ENCODE measurements at regions of chr15 and their contacts with region 1.

Region 1: DNA sequence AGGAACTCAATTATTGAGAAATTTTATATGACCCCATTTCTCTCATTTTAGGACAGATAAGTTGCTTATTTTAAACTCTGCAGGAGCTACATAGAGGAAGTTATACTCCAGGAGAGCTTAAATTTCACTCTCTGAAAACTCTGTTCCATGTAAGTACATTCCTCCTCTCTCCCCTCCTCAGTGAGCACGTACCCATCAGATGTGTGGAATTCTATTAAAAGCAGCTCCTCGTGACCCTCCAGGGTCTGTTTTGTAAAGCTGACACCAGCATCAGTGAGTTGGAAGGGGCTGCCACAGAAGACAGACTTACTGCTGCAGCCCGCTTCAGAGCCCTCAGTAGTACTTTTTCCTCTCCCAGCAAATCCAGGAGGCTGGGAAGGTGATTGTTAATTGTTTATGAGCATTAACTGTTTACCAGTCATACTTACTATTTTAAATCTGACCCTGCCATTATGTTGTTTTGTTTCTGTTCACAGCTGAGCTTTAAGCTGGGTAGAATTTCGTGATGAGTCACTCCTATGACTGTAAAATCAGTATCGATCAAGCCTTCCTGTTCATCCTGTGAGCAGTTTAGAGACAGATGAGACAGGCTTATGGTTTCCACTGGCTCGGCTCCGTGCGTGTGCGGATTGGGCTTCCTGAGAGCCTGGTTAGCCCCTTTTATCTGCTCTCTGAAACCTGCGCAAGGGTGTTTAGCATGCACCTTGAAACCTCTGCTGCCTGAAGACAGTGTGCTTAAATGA is 20.4 kb downstream of the IGF1R start:
- DNase-seq: no peak
- ATAC-seq: no peak
- H3K4me3 ChIP-seq: no peak overlapping the region
- H3K27ac ChIP-seq: no peak overlapping the region
- H3K4me1 ChIP-seq: peaks cover 11 to 48% of the 10 kb centered on the region in 2 donors
- H3K27me3 ChIP-seq: no peaks in the 10 kb centered on the region
- CTCF ChIP-seq: no peak

Region 2: DNA sequence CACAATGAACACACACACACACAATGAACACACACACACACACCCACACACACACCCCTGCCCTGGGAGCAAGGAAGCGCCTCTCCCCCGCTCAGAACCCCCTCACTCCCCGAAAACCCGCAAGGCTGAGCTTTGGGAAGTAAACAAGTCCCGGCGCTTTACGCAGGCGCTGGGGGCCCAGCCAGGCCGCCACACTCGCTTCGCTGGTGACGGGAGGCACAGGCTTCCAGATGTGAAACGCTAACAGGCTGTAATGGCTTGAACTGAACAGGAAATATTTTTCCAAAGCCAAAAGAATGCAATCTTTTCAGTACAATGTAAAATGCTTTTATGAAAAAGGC is 143.1 kb before region 1 on chr15:
- intact Hi-C with region 1: loop called in 1 of 2 experiments (anchors 10 kb)
- DNase-seq: peak in 3 of 4 donors; percentile 42 to 77 (median 66)
- ATAC-seq: no peak
- H3K4me3 ChIP-seq: no peak overlapping the region
- H3K27ac ChIP-seq: peak overlapping the region in 1 of 2 donors; percentile 18
- H3K4me1 ChIP-seq: peaks cover 0 to 7% of the 10 kb centered on the region in 2 donors
- H3K27me3 ChIP-seq: no peaks in the 10 kb centered on the region
- CTCF ChIP-seq: no peak

Region 3: GRCh38 chr15:99076552-99077308 is 408.0 kb after region 1 on chr15:
- intact Hi-C with region 1: loop called in 1 of 2 experiments (anchors 10 kb)
- DNase-seq: peak in 3 of 4 donors; percentile 59 to 78 (median 68)
- ATAC-seq: peak; percentile 99
- H3K4me3 ChIP-seq: peak overlapping the region; percentile 10 to 25
- H3K27ac ChIP-seq: no peak overlapping the region
- H3K4me1 ChIP-seq: peaks cover 0 to 6% of the 10 kb centered on the region in 2 donors
- H3K27me3 ChIP-seq: no peaks in the 10 kb centered on the region
- CTCF ChIP-seq: peak; percentile 78 to 80